ENCODE measurements at regions of chr4 and their contacts with region 1.

Region 1: DNA sequence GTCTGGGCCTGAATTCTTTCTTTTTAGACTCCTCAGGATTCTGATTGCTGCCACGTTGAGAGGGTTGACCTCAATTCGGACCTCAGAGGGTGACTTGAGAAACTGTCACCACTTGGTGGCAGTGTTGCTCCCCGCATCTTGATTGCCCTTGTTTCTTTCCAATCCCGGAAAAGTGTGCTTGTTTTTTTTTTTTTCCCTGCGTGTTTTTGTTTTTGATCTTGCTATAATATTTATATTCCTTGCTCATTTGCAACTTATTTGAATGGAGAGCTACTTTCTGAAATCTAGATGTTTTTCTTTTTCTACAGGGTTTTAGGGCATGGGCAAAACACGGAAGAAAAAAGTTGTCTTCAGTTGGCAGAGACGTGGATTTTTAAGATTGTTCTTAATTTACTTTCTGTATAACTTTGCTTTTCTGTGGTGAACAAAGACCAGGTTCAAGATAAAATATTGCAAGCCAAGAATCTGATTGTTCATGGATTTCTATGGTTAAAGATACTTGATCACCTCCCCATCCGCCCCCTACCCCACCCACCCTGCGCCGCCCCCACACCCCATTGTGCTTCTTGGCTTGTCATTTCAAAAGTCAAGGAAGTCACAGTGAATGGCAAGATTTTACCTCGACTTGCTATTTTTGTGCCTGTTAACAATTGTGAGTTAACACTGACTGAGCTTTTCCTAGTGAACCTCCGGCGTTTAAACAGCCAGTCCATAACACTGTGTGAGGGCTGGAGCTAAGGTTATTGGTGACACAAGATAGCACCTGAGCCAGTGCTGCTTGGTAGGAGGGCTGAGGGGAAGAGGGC is 102.1 kb downstream of the PTTG2 start:
- DNase-seq: peak in 9 of 10 donors; percentile 45 to 95 (median 81)

Region 2: GRCh38 chr4:38675146-38676121 is 613.1 kb after region 1 on chr4:
- intact Hi-C with region 1: loop called (anchors 5 kb)
- DNase-seq: peak in 8 of 10 donors; percentile 49 to 93 (median 82)

Region 3: DNA sequence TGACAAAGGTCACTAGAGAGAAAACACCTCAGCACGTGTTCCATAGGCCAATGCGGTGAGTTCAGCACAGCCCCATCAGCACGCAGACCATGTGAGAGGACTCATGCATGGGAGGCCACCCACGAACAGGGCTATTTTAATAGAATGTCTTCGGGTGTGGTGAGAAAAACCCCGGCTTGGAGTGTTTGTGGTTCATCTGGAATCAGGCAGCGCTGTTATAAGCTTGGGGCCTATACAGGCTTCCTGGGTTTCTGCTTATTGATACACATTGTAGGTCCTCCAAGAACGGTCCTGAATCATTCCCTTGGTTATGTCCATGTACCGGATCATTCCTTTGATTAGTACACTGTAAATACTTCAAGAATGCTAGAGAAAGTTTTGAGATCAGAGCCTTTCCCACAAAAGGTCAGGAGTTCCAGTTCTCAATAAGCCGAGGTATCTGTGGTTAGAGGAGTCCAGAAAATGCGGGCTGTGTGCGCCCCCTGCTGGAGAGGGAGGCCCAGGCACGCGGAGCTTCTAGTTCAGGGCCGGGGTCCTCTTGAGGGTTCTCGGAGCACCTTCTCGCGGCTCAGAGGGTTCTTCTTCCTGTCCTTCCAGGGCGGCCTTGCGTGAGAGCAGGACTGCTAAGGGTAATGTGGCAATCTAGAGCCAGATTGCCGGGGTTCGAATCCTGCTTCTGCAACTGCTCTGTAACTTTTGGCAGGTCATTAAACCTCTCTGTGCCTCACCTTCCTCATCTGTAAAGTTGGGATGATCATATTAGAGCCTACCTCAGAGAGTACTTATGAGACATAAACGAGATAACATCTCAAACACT is 668.7 kb after region 1 on chr4:
- intact Hi-C with region 1: loop called (anchors 2 kb)
- DNase-seq: peak; percentile 31 to 96 (median 82)

Region 4: GRCh38 chr4:38782452-38783108 is 720.3 kb after region 1 on chr4 and contains the start of gene TLR10:
- intact Hi-C with region 1: loop called (anchors 5 kb)
- DNase-seq: peak in 1 of 10 donors; percentile 34

Region 5: DNA sequence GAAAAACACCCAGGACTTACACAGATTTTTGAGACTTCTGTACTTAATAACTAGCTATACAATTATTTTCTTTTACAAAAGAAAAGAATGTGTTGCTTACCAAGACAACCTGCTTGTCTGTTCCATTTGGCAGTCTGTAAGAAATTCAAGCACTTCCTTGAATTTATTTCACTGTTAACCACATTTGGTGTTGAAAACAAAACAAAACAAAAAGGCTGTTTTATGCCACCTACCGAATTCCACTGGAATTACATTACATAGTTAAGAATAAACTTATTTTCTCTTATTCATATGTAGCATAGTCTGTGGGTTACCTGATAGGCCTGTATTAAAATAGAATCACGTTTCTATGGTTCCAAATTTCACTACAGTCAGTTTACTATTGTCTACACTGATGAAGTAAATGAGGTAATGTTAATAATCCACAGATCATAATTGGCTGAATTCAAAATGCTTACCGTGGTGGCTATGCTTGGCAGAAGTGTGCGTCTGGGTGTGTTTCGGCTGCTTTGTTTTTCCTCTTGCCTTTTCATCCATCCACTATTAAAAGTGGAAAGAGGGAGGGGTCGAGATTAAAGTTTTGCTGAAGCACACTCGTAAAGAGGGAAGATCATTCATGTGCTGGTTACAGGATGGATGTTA is 742.5 kb after region 1 on chr4 and contains the start of gene TLR1:
- intact Hi-C with region 1: loop called (anchors 5 kb)
- DNase-seq: no peak